Activated CD4-positive, alpha-beta memory T cell treated with anti-CD3 and anti-CD28 coated beads, Interleukin-2, amount 10 ng/mL, durations not matched to agents 7 days and 5 days (primary cell): ENCODE measurements at regions of chr2 and their contacts with region 1.

Region 1: DNA sequence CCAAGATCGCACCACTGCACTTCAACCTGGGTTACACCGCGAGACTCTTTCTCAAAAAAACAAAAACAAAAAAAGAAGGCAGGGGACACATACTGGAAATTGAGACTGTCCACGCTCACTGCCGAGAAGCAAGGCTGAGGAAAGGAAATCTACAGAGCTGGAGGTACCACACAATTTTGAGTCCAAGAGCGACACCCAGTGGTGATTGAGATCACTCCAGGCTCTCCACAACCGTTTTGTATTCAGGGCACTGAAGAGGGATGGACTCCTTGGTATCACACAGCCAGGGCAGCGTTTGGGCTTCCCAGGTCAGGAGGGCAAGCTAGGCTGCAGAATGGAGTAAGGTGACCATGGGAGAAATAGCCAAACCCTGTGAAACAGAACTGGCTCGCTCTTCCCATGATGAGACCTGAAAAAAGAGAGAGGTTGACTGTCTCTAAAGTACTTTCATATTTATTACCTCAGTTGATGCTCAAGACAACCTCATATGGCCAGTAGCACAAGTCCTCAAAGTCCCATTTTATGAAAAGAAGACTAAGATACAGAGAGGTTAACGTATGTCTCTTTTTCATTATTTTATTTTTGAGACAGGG is 74.5 kb upstream of the YPEL5 start:
- DNase-seq: peak; percentile 67
- H3K4me3 Mint-ChIP-seq: no peak overlapping the region
- H3K27ac Mint-ChIP-seq: no peak overlapping the region
- H3K4me1 Mint-ChIP-seq: no peaks in the 10 kb centered on the region
- H3K27me3 Mint-ChIP-seq: peaks cover 19% of the 10 kb centered on the region

Region 2: GRCh38 chr2:29923110-29923721 is 149.1 kb before region 1 on chr2:
- CTCF ChIA-PET with region 1: interaction called, 27 read pairs
- POLR2A ChIA-PET with region 1: no interaction called
- DNase-seq: peak; percentile 54
- H3K4me3 Mint-ChIP-seq: no peak overlapping the region
- H3K27ac Mint-ChIP-seq: no peak overlapping the region
- H3K4me1 Mint-ChIP-seq: peaks cover 5% of the 10 kb centered on the region
- H3K27me3 Mint-ChIP-seq: peaks cover 46% of the 10 kb centered on the region